Calu3 (cell line): ENCODE measurements at regions of chr4 and their contacts with region 1.

Region 1: GRCh38 chr4:177339477-177340374 is 30.1 kb downstream of the NEIL3 start:
- DNase-seq: no peak
- H3K4me3 Mint-ChIP-seq: no peak overlapping the region
- H3K27ac Mint-ChIP-seq: no peak overlapping the region
- H3K4me1 Mint-ChIP-seq: no peaks in the 10 kb centered on the region
- H3K27me3 Mint-ChIP-seq: no peaks in the 10 kb centered on the region
- CTCF ChIP-seq: peak; percentile 27

Region 2: DNA sequence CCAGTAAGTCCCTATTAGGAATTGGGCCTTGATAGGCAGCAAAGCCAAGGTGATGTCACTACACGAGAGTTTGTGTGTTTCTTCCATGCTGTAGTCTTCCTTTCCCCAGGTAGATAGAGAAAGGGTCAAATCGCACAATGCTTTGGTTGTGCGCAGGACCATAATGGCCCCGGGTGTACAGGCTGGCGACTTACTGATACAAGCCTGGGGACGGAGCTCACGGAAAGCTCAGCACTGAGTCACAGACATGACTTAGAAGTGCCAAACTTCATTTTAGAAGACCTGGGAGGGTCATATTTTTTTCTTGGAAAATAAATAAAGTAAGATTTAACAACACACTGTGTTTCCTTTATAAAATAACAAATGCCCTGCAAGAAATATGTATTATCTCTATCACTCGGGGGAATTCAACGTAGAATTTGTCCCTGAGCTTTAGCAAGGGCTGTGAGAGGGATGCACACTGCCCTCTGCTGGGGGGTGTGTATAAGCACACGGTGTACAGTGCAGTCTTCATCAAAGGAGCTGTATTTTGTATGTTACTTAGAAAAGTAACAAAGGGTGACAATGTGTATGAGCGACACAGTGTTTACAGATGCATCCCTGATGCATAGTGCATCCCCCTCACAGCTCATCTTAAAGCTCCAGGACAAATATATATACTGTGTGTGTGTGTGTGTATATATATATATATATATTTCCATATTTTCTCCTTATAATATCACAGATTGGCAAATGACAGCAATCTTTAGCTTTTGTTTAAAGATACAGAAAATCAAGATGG is 292.5 kb before region 1 on chr4:
- CTCF ChIA-PET with region 1: no interaction called
- intact Hi-C with region 1: loop called (anchors 5 kb)
- DNase-seq: peak; percentile 73
- H3K4me3 Mint-ChIP-seq: no peak overlapping the region
- H3K27ac Mint-ChIP-seq: no peak overlapping the region
- H3K4me1 Mint-ChIP-seq: no peaks in the 10 kb centered on the region
- H3K27me3 Mint-ChIP-seq: no peaks in the 10 kb centered on the region
- CTCF ChIP-seq: peak; percentile 59

Region 3: GRCh38 chr4:177108708-177109107 is 231.0 kb before region 1 on chr4:
- CTCF ChIA-PET with region 1: no interaction called
- intact Hi-C with region 1: loop called (anchors 1 kb)
- DNase-seq: no peak
- H3K4me3 Mint-ChIP-seq: no peak overlapping the region
- H3K27ac Mint-ChIP-seq: no peak overlapping the region
- H3K4me1 Mint-ChIP-seq: no peaks in the 10 kb centered on the region
- H3K27me3 Mint-ChIP-seq: no peaks in the 10 kb centered on the region
- CTCF ChIP-seq: no peak

Region 4: DNA sequence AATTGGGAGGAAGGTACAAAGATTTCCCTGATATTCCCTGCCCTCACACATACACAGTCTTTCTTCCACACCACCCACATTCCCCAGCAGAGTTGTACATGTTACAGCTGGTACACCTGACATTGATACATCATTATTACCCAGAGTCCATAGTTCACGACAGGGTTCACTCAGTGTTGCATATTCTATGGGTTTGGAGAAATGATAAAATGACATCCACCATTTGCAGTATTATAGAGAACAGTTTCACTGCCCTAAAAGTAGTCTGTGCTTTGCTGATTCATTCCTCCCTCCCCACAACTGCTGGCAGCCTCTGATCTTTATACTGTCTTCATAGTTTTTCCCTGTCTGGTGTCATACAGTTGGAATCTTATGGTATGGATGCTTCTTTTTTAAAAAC is 87.5 kb after region 1 on chr4:
- CTCF ChIA-PET with region 1: no interaction called
- intact Hi-C with region 1: no loop called
- DNase-seq: no peak
- H3K4me3 Mint-ChIP-seq: no peak overlapping the region
- H3K27ac Mint-ChIP-seq: no peak overlapping the region
- H3K4me1 Mint-ChIP-seq: no peaks in the 10 kb centered on the region
- H3K27me3 Mint-ChIP-seq: no peaks in the 10 kb centered on the region
- CTCF ChIP-seq: no peak

Region 5: DNA sequence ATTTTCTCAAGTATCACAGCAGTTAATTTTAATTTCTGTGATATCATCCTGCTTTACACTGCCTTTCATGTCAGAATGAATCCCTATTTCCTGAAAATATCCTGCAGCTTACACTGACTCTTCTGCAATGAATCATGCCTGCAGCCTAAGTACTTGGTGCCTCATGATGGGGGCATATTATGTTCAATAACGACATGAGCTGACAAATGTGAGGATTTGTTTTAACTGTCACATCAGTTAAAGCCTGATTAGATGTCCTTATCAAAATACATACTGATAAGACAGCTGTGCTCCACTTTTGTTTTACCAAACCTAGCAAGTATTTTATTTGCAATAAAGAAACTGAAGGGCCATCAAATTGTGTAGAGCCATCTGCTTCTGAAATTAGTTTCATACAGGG is 462.4 kb after region 1 on chr4:
- CTCF ChIA-PET with region 1: no interaction called
- intact Hi-C with region 1: no loop called
- DNase-seq: no peak
- H3K4me3 Mint-ChIP-seq: no peak overlapping the region
- H3K27ac Mint-ChIP-seq: no peak overlapping the region
- H3K4me1 Mint-ChIP-seq: no peaks in the 10 kb centered on the region
- H3K27me3 Mint-ChIP-seq: no peaks in the 10 kb centered on the region
- CTCF ChIP-seq: no peak